Activated CD4-positive, alpha-beta memory T cell treated with anti-CD3 and anti-CD28 coated beads for 36 hours (primary cell): ENCODE measurements at regions of chr17 and their contacts with region 1.

Region 1: DNA sequence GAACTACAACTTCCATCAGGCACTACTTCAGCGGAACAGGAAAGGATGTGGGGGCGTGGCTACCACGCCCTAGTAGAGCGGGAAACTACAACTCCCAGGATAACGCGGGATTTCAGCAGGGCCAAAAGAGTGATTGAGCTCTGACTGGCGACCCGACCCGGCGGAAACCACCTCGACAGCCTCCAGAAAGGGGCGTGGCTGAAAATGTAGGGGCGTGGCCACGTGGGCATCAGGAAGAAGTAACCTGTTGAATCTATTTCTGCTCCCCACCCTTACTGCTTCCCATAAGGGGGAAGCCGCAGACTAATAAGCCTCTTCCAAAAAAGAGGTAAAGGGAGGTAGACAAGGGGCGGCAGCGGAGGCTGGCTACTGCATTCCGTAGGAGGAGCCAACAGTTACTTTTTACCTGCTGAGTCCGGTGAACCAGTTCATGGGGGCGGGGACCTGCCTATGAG is at the start of gene TMEM102:
- DNase-seq: peak; percentile 99
- H3K4me3 Mint-ChIP-seq: peak within 1 kb of the TSS; percentile 91
- H3K27ac Mint-ChIP-seq: peak within 1 kb of the TSS; percentile 95
- H3K4me1 Mint-ChIP-seq: peaks cover 36% of the 10 kb centered on the region
- H3K27me3 Mint-ChIP-seq: peaks cover 15% of the 10 kb centered on the region
- total RNA-seq, gene TMEM102: 11.4 to 11.6 TPM

Region 2: GRCh38 chr17:7167832-7168231 is 267.4 kb before region 1 on chr17:
- CTCF ChIA-PET with region 1: no interaction called
- POLR2A ChIA-PET with region 1: no interaction called
- intact Hi-C with region 1: no loop called
- DNase-seq: no peak
- H3K4me3 Mint-ChIP-seq: no peak overlapping the region
- H3K27ac Mint-ChIP-seq: no peak overlapping the region
- H3K4me1 Mint-ChIP-seq: no peaks in the 10 kb centered on the region
- H3K27me3 Mint-ChIP-seq: peaks cover 3% of the 10 kb centered on the region

Region 3: GRCh38 chr17:7252176-7253043 is 182.8 kb before region 1 on chr17 and contains the start of gene ELP5:
- CTCF ChIA-PET with region 1: no interaction called
- POLR2A ChIA-PET with region 1: no interaction called
- intact Hi-C with region 1: loop called (anchors 5 kb)
- DNase-seq: peak; percentile 94
- H3K4me3 Mint-ChIP-seq: peak within 1 kb of the TSS; percentile 96
- H3K27ac Mint-ChIP-seq: peak within 1 kb of the TSS; percentile 100
- H3K4me1 Mint-ChIP-seq: peaks cover 40% of the 10 kb centered on the region
- H3K27me3 Mint-ChIP-seq: no peaks in the 10 kb centered on the region
- total RNA-seq, gene ELP5: 49.6 to 52.4 TPM

Region 4: GRCh38 chr17:7329374-7329996 is 105.8 kb before region 1 on chr17:
- CTCF ChIA-PET with region 1: interaction called, 5 read pairs
- POLR2A ChIA-PET with region 1: no interaction called
- intact Hi-C with region 1: loop called (anchors 5 kb)
- DNase-seq: peak; percentile 98
- H3K4me3 Mint-ChIP-seq: peak overlapping the region; percentile 89
- H3K27ac Mint-ChIP-seq: peak overlapping the region; percentile 94
- H3K4me1 Mint-ChIP-seq: peaks cover 41% of the 10 kb centered on the region
- H3K27me3 Mint-ChIP-seq: no peaks in the 10 kb centered on the region

Region 5: GRCh38 chr17:7403977-7404736 is 31.1 kb before region 1 on chr17 and contains the start of gene TMEM256:
- CTCF ChIA-PET with region 1: interaction called, 25 read pairs
- POLR2A ChIA-PET with region 1: interaction called, 6 read pairs
- intact Hi-C with region 1: loop called (anchors 1 kb)
- DNase-seq: peak; percentile 99
- H3K4me3 Mint-ChIP-seq: peak within 1 kb of the TSS; percentile 97
- H3K27ac Mint-ChIP-seq: peak within 1 kb of the TSS; percentile 92
- H3K4me1 Mint-ChIP-seq: peaks cover 25% of the 10 kb centered on the region
- H3K27me3 Mint-ChIP-seq: no peaks in the 10 kb centered on the region
- total RNA-seq, gene TMEM256: 87.0 to 88.5 TPM

Region 6: DNA sequence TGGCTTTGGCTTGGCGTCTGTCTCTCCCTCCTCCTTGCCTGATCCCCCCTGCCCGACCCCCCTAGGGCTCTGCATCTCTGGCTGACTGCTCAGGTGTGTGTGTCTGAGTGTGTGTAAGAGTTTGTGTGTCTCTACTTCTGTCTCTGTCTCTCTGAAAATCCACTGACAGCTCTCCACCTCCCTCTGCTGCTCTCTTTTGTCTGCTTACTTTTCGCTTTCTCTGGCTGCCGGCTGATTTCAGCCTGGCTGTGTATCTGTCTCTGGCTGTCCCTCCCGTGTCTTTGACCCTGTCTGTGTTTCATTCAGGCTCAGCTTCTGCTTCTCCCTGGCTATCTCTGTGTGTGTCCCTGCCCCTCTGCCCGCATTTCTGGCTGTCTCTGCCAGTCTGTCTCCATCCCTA is 18.9 kb before region 1 on chr17:
- CTCF ChIA-PET with region 1: no interaction called
- POLR2A ChIA-PET with region 1: no interaction called
- intact Hi-C with region 1: no loop called
- DNase-seq: no peak
- H3K4me3 Mint-ChIP-seq: no peak overlapping the region
- H3K27ac Mint-ChIP-seq: no peak overlapping the region
- H3K4me1 Mint-ChIP-seq: no peaks in the 10 kb centered on the region
- H3K27me3 Mint-ChIP-seq: no peaks in the 10 kb centered on the region

Region 7: DNA sequence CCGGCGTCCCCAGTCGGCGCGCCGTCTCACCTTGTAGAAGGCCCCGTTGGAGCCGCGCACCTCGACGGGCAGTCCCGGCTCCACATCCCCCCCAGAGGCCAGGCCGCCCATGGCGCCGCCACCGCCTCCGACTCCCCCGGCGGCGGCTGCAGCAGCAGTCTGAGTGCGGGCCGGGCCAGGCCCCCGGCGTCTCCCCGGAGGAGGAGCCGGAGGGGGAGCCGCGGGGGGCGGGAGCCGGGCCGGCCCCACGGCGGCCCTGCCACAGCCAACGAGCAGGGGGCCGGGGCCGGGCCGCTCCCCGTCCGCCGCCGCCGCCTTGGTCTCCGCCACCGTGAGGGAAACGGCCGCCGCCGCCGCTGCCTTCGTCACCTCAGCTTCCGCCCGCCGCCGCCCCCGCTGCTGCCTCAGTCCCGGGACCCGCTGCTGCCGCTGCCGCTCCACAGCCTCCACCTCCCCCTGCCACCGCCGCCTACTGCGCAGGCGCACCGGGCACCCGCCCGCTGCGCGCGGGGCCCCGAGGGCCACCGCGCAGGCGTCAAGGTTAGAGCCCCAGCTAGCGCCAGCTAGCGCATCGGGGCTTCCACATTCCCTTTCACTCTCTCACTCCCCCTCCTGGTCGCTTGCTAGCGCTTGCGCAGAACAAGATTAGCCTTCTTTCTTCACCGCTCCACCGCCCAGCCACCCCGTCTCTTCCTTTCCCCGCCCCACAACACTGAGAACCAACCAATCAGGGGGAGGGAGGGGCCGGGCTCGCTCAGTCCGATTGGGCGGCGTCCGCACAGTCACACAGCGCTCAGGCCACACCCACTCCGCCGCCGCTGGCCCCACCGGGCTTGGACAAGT is 179.4 kb after region 1 on chr17 and contains the start of gene FXR2:
- CTCF ChIA-PET with region 1: no interaction called
- POLR2A ChIA-PET with region 1: no interaction called
- intact Hi-C with region 1: loop called (anchors 2 kb)
- DNase-seq: peak; percentile 100
- H3K4me3 Mint-ChIP-seq: peak within 1 kb of the TSS; percentile 87
- H3K27ac Mint-ChIP-seq: peak within 1 kb of the TSS; percentile 87
- H3K4me1 Mint-ChIP-seq: peaks cover 31% of the 10 kb centered on the region
- H3K27me3 Mint-ChIP-seq: no peaks in the 10 kb centered on the region
- total RNA-seq, gene FXR2: 37.5 to 40.1 TPM